Panc1 (cell line): ENCODE measurements at regions of chr1 and their contacts with region 1.

Region 1: GRCh38 chr1:22969304-22969709 is 3.4 kb downstream of the LACTBL1 start:
- DNase-seq: no peak
- ATAC-seq: peak; percentile 64; the same call in 1 of the 2 replicates
- H3K4me3 ChIP-seq: no peak overlapping the region
- H3K27ac ChIP-seq: no peak overlapping the region
- H3K4me1 ChIP-seq: no peaks in the 10 kb centered on the region
- H3K27me3 ChIP-seq: peaks cover 14% of the 10 kb centered on the region
- CTCF ChIP-seq: no peak

Region 2: GRCh38 chr1:22665752-22666151 is 303.6 kb before region 1 on chr1:
- CTCF ChIA-PET with region 1: no interaction called
- POLR2A ChIA-PET with region 1: no interaction called
- in situ Hi-C with region 1: no loop called
- intact Hi-C with region 1: loop called (anchors 5 kb)
- DNase-seq: no peak
- ATAC-seq: peak; percentile 88
- H3K4me3 ChIP-seq: no peak overlapping the region
- H3K27ac ChIP-seq: no peak overlapping the region
- H3K4me1 ChIP-seq: no peaks in the 10 kb centered on the region; the same call in 1 of the 2 replicates
- H3K27me3 ChIP-seq: no peaks in the 10 kb centered on the region
- CTCF ChIP-seq: peak; percentile 87

Region 3: GRCh38 chr1:22932803-22933470 is 36.4 kb before region 1 on chr1:
- CTCF ChIA-PET with region 1: no interaction called
- POLR2A ChIA-PET with region 1: no interaction called
- in situ Hi-C with region 1: no loop called
- intact Hi-C with region 1: no loop called
- DNase-seq: no peak
- ATAC-seq: no peak
- H3K4me3 ChIP-seq: no peak overlapping the region
- H3K27ac ChIP-seq: no peak overlapping the region
- H3K4me1 ChIP-seq: no peaks in the 10 kb centered on the region
- H3K27me3 ChIP-seq: no peaks in the 10 kb centered on the region
- CTCF ChIP-seq: no peak

Region 4: GRCh38 chr1:23159963-23160877 is 190.9 kb after region 1 on chr1:
- CTCF ChIA-PET with region 1: no interaction called
- POLR2A ChIA-PET with region 1: interaction called, 10 read pairs
- in situ Hi-C with region 1: no loop called
- intact Hi-C with region 1: no loop called
- DNase-seq: no peak
- ATAC-seq: no peak
- H3K4me3 ChIP-seq: no peak overlapping the region
- H3K27ac ChIP-seq: no peak overlapping the region; the same call in 1 of the 2 replicates
- H3K4me1 ChIP-seq: peaks cover 12% of the 10 kb centered on the region; the same call in 1 of the 2 replicates
- H3K27me3 ChIP-seq: no peaks in the 10 kb centered on the region
- CTCF ChIP-seq: no peak